MCF 10A (cell line): ENCODE measurements at regions of chr4 and their contacts with region 1.

Region 1: DNA sequence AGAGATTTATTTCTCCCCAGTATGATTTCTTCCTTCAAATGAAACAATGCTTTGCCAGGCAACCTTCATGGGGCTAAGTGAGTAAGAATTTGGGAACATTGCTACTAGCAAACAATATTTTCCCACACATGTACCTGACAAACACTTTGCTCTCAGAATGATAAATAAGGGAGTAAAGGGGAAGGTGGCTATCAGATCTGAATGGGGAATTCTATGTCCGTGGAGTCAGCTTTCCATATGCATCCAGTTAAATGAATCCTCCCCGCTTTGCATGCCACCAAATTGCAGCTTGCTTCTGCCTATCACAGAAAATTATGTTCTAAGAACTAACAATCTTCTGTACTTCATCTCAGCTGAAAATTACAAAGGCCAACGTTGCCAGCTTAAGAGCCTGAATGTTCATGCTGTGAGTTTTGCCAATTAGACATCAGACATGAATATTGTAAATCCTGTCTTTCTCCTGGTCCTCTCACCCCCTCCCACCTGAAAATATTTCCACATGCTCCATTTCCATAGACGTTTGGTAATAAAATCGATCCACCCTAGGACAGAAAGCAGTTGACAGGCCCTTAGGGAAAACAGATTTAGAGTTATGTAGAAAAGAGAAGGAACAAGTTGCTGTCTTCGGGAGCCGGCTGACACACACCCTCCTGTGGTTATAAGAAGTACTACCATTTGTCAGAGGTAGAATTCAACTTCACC is 6.3 kb downstream of the MEPE start:
- DNase-seq: peak; percentile 49
- H3K4me3 Mint-ChIP-seq: no peak overlapping the region
- H3K27ac Mint-ChIP-seq: no peak overlapping the region
- H3K4me1 Mint-ChIP-seq: peaks cover 10% of the 10 kb centered on the region
- H3K27me3 Mint-ChIP-seq: no peaks in the 10 kb centered on the region
- CTCF ChIP-seq: peak; percentile 75

Region 2: DNA sequence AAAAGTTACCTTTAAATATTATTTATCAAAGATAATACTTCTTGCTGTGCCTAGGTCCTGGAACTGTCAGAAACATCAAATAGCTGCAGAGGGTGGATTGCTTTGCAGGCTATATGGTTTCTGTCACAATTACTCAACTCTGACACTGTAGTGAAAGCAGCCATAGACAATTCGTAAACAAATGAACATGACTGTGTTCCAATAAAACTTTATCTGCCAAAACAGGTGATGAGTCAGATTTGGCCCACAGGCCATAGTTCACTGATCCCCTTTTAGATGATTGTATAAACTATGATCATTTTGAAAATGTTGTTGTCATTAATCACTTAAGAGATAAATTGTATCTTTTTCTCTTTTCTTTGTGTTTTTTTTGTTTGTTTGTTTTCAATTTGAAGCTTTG is 14.7 kb before region 1 on chr4:
- CTCF ChIA-PET with region 1: interaction called, 16 read pairs
- POLR2A ChIA-PET with region 1: interaction called, 4 read pairs
- intact Hi-C with region 1: no loop called
- DNase-seq: no peak
- H3K4me3 Mint-ChIP-seq: no peak overlapping the region
- H3K27ac Mint-ChIP-seq: no peak overlapping the region
- H3K4me1 Mint-ChIP-seq: peaks cover 8% of the 10 kb centered on the region
- H3K27me3 Mint-ChIP-seq: no peaks in the 10 kb centered on the region
- CTCF ChIP-seq: no peak

Region 3: GRCh38 chr4:87919941-87920340 is 80.9 kb after region 1 on chr4:
- CTCF ChIA-PET with region 1: no interaction called
- POLR2A ChIA-PET with region 1: no interaction called
- intact Hi-C with region 1: no loop called
- DNase-seq: no peak
- H3K4me3 Mint-ChIP-seq: no peak overlapping the region
- H3K27ac Mint-ChIP-seq: no peak overlapping the region
- H3K4me1 Mint-ChIP-seq: no peaks in the 10 kb centered on the region
- H3K27me3 Mint-ChIP-seq: no peaks in the 10 kb centered on the region
- CTCF ChIP-seq: no peak

Region 4: DNA sequence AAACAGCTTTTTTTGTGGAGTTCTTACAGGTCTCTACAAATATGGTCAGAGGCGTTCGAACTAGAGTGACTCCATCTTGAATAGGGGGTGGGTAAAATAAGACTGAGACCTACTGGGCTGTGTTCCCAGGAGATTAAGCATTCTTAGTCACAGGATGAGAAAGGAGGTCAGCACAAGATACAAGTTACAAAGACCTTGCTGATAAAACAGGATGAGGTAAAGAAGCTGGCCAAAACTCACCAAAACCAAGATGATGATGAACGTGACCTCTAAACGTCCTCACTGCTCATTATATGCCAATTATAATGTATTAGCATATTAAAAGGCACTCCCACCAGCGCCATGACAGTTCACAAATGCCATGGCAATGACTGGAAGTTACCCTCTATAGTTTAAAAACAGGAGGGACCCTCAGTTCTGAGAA is 93.7 kb after region 1 on chr4:
- CTCF ChIA-PET with region 1: no interaction called
- POLR2A ChIA-PET with region 1: no interaction called
- intact Hi-C with region 1: no loop called
- DNase-seq: no peak
- H3K4me3 Mint-ChIP-seq: no peak overlapping the region
- H3K27ac Mint-ChIP-seq: no peak overlapping the region
- H3K4me1 Mint-ChIP-seq: no peaks in the 10 kb centered on the region
- H3K27me3 Mint-ChIP-seq: no peaks in the 10 kb centered on the region
- CTCF ChIP-seq: no peak

Region 5: GRCh38 chr4:88352062-88352740 is 513.2 kb after region 1 on chr4:
- CTCF ChIA-PET with region 1: no interaction called
- POLR2A ChIA-PET with region 1: no interaction called
- intact Hi-C with region 1: no loop called
- DNase-seq: peak; percentile 46
- H3K4me3 Mint-ChIP-seq: no peak overlapping the region
- H3K27ac Mint-ChIP-seq: peak overlapping the region; percentile 37
- H3K4me1 Mint-ChIP-seq: peaks cover 9% of the 10 kb centered on the region
- H3K27me3 Mint-ChIP-seq: no peaks in the 10 kb centered on the region
- CTCF ChIP-seq: no peak